RWPE1 (cell line): ENCODE measurements at regions of chr14 and their contacts with region 1.

Region 1: DNA sequence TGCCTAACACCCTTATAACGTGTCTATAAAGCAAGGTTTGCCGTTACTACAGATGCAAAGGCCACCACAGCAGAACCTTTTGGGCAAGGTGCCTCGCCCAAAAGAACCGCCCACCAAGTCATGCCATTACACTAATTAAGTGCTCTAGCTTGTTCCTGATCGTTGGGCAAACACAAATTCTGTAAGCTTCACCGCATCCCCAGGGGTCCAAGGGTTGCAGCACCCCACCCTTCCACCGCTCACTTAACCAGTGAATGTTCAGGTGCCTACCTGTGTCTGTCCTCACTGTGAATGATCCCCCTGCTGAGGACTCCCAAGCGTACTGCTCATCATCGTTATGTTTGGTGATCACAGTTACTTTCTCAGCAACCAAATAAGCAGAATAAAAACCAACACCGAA is 1.4 kb downstream of the HSP90AA1 start:
- DNase-seq: no peak
- H3K27ac ChIP-seq: peak overlapping the region; percentile 30; the same call in 1 of the 2 replicates
- CTCF ChIP-seq: no peak

Region 2: GRCh38 chr14:102020058-102020971 is 65.2 kb before region 1 on chr14:
- CTCF ChIA-PET with region 1: no interaction called
- POLR2A ChIA-PET with region 1: no interaction called
- DNase-seq: no peak
- H3K27ac ChIP-seq: 0 out of 2 replicates have a peak overlapping the region, but pooled peaks have one; percentile 2
- CTCF ChIP-seq: no peak

Region 3: GRCh38 chr14:102096214-102097114 is 11.0 kb after region 1 on chr14:
- CTCF ChIA-PET with region 1: interaction called, 12 read pairs
- POLR2A ChIA-PET with region 1: interaction called, 4 read pairs
- DNase-seq: peak; percentile 73
- H3K27ac ChIP-seq: peak overlapping the region; percentile 24
- CTCF ChIP-seq: peak; percentile 86

Region 4: DNA sequence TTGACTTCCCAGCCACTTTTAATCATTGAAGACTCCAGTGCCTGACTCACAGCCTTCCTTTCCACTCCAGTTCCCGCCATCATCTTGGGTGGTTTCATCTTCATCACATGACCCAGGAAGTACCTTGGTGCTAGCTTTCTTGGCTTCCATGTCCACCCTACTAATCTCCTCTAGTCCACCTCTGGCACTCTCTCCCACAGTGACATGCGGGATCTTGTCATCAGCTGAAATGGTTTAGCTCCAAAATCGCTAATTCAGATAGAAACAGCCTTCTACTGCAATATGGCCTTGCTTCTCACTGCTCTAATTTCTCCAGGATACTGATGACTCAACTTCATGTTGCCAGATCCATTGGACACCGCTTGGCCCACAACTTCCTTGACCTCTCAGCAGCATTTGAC is 78.8 kb after region 1 on chr14:
- CTCF ChIA-PET with region 1: no interaction called
- POLR2A ChIA-PET with region 1: no interaction called
- DNase-seq: no peak
- H3K27ac ChIP-seq: peak overlapping the region; percentile 16; the same call in 1 of the 2 replicates
- CTCF ChIP-seq: no peak

Region 5: GRCh38 chr14:102320033-102320660 is 234.7 kb after region 1 on chr14:
- CTCF ChIA-PET with region 1: no interaction called
- POLR2A ChIA-PET with region 1: no interaction called
- DNase-seq: no peak
- H3K27ac ChIP-seq: peak overlapping the region; percentile 87
- CTCF ChIP-seq: no peak